ENCODE measurements at regions of chr2 and their contacts with region 1.

Region 1: DNA sequence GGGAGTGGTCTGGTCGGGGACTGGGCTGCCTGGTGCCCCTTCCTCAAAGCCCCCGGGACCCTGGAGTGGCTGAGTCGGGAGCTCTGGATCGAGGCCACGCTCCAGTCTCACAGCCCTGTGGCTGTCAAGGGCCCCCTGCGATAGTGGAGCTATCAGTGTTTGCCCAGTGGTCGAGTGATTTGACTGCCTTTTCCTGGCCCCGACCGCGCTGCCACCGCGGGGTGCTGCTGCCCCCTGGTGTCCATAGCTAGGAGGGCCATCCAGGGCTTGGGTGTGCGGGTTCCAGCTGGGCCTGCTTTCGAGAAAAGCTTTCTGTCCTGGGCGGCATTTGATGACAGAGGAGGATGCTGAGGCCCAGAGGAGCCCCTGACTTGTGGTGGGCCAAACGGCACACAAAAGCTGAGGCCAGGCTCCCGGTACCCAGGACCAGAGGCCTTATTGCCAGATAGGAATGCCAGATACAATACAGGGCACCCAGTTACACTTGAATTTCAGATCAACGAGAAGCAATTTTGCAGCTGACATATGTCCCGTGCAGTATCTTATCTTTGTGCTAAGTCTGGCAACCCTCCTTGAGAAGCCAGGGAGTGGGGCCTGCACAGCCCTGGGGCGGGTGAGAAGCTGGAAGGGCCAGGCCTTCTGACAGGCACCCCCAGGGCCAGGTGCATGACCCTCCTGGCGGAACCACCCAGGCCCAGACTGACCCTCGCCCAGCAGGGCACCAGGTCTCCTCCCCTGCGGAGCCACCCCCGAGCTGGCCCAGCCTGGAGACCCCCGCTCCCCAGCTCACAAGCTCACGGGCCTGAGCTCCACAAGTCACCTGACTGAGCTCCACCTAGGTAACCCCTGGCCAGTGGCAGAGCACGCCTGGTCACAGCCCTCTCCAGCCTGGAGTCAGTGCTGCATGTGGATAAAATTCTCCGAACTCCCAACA is 13.0 kb downstream of the ODC1 start:
- DNase-seq: no peak
- H3K4me3 ChIP-seq: no peak overlapping the region
- H3K27me3 ChIP-seq: no peaks in the 10 kb centered on the region
- CTCF ChIP-seq: peak; percentile 97

Region 2: DNA sequence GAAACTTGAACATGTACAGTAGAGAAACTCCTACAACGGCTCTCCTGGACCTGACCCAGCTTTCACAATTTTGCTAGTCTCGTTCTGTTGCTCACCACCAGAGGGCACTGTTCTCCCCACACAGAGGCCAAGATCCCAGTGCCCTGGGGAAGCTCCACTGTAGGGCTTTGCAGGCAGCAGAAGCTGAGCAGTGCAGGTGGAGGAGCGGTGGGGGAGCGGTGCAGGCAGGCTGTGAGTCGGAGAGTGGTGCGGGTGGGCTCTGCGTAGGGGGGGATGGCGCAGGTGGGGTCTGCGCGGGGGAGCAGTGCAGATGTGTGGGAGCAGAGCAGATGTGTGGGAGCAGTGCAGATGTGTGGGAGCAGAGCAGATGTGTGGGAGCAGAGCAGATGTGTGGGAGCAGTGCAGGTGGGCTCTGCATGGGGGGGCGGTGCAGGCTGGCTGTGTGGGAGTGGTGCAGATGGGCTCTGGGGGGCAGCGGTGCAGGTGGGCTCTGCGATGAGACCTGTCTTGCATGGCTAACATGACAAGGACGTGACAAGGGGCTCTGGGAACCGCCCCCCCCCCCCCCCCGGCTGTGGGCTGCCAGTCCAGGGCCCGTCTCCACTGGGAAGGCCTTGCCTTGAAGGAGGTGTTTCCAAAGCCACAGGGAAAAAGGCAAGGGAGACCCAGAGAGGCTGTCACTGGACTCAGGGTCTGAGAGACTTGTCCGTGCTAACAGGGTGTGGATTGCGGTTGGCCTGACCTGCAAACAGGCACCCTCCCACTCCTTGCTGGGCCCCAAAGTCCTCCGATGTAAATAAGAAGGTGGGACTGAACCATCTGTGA is 362.3 kb before region 1 on chr2:
- CTCF ChIA-PET with region 1: interaction called, 192 read pairs
- POLR2A ChIA-PET with region 1: no interaction called
- DNase-seq: no peak
- H3K4me3 ChIP-seq: no peak overlapping the region
- H3K27me3 ChIP-seq: 0 out of 2 replicates have a peak, but pooled peaks cover 2% of the 10 kb centered on the region
- CTCF ChIP-seq: peak; percentile 93

Region 3: DNA sequence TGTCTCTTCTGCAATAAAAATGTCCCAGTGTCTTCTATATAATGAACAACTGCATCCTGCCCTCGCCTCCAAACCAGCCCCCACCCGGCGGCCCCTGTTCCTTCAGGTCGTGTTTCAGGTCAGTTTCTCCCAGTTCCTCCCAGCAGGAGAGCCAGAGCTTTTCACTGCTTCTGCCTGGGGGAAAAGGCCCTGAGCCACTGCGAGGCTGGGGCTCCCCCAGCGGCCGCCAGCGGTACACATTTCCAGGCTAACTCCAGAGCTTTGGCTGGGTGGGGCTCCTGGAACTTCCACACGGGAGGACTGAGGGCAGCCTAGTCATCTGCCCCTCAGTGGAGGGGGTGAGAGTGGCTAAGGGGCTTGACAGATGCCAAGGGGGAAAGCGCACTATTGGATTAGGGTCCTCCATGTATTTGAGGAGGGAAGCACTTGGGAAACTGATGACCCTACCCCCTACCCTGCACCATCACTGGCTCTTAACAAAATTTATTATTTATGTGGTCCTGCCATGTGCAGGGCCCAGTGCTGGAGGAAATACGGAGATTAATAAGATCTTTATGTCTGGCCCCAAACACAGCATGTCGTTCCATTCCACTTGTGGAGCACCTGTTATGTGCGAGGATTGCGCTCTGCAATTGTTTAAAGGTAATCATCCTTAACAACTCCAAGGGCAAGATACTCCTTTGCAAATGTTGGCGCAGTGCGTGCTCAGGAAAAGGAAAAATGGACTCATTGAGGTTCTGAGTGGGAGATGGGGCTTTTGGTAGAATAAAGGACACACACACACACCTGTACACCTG is 337.6 kb before region 1 on chr2:
- CTCF ChIA-PET with region 1: interaction called, 16 read pairs
- POLR2A ChIA-PET with region 1: no interaction called
- DNase-seq: no peak
- H3K4me3 ChIP-seq: no peak overlapping the region
- H3K27me3 ChIP-seq: no peaks in the 10 kb centered on the region
- CTCF ChIP-seq: peak; percentile 99

Region 4: GRCh38 chr2:10129490-10129889 is 305.7 kb before region 1 on chr2:
- CTCF ChIA-PET with region 1: interaction called, 93 read pairs
- POLR2A ChIA-PET with region 1: no interaction called
- DNase-seq: no peak
- H3K4me3 ChIP-seq: no peak overlapping the region
- H3K27me3 ChIP-seq: no peaks in the 10 kb centered on the region
- CTCF ChIP-seq: no peak

Region 5: GRCh38 chr2:10269711-10270610 is 165.2 kb before region 1 on chr2:
- CTCF ChIA-PET with region 1: interaction called, 11 read pairs
- POLR2A ChIA-PET with region 1: no interaction called
- DNase-seq: no peak
- H3K4me3 ChIP-seq: no peak overlapping the region
- H3K27me3 ChIP-seq: peaks cover 4% of the 10 kb centered on the region
- CTCF ChIP-seq: no peak

Region 6: DNA sequence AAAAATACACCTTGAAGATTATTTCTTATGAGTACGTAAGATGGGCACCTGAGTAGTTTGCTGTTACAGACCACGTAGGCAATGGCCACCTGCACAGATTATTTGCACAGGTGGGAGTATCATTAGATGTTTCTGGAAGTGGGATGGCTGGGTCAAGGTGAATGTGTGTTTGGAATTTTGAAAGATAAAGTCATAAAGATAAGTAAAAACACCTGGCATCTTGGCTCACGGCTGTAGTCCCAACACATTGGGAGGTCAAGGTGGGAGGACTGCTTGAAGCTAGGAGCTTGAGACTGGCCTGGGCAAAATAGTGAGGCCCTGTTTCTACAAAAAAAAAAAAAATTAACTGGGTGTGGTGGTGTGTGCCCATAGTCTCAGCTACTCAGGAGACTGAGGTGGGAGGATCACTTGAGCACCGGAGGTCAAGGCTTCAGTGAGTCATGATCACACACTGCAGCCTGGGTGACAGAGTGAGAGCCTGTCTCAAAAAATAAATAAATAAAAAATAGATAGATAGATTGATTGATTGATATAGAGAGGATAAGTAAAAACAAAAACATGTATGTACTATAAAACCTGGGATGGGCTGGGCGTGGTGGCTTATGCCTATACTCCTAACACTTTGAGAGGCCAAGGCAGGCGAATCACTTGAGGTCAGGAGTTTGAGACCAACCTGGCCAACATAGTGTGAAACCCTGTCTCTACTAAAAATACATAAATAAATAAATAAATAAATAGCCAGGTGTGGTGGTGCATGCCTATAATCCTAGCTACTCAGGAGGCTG is 17.4 kb before region 1 on chr2:
- CTCF ChIA-PET with region 1: interaction called, 15 read pairs
- POLR2A ChIA-PET with region 1: no interaction called
- DNase-seq: no peak
- H3K4me3 ChIP-seq: no peak overlapping the region
- H3K27me3 ChIP-seq: no peaks in the 10 kb centered on the region
- CTCF ChIP-seq: no peak

Region 7: GRCh38 chr2:10659898-10660568 is 224.9 kb after region 1 on chr2:
- CTCF ChIA-PET with region 1: interaction called, 15 read pairs
- POLR2A ChIA-PET with region 1: no interaction called
- DNase-seq: peak; percentile 31
- H3K4me3 ChIP-seq: no peak overlapping the region
- H3K27me3 ChIP-seq: no peaks in the 10 kb centered on the region
- CTCF ChIP-seq: peak; percentile 84